Activated CD8-positive, alpha-beta memory T cell treated with anti-CD3 and anti-CD28 coated beads, Interleukin-2, amount 10 ng/mL, durations not matched to agents 7 days and 5 days (primary cell): ENCODE measurements at regions of chr15 and their contacts with region 1.

Region 1: GRCh38 chr15:90902040-90902839 is 862 bp upstream of the MAN2A2 start:
- DNase-seq: peak; percentile 85
- ATAC-seq: peak; percentile 81
- H3K4me3 Mint-ChIP-seq: peak overlapping the region; percentile 87
- H3K27ac Mint-ChIP-seq: peak overlapping the region; percentile 91
- H3K4me1 Mint-ChIP-seq: peaks cover 39% of the 10 kb centered on the region
- H3K27me3 Mint-ChIP-seq: no peaks in the 10 kb centered on the region

Region 2: GRCh38 chr15:90924375-90924774 is 22.1 kb after region 1 on chr15:
- CTCF ChIA-PET with region 1: interaction called, 181 read pairs
- DNase-seq: peak; percentile 60
- ATAC-seq: peak; percentile 52
- H3K4me3 Mint-ChIP-seq: peak overlapping the region; percentile 21
- H3K27ac Mint-ChIP-seq: peak overlapping the region; percentile 89
- H3K4me1 Mint-ChIP-seq: peaks cover 50% of the 10 kb centered on the region
- H3K27me3 Mint-ChIP-seq: no peaks in the 10 kb centered on the region

Region 3: GRCh38 chr15:90982135-90982534 is 79.9 kb after region 1 on chr15:
- CTCF ChIA-PET with region 1: no interaction called
- DNase-seq: no peak
- ATAC-seq: peak; percentile 12
- H3K4me3 Mint-ChIP-seq: no peak overlapping the region
- H3K27ac Mint-ChIP-seq: peak overlapping the region; percentile 34
- H3K4me1 Mint-ChIP-seq: peaks cover 38% of the 10 kb centered on the region
- H3K27me3 Mint-ChIP-seq: no peaks in the 10 kb centered on the region